ENCODE measurements at regions of chr3 and their contacts with region 1.

Region 1: DNA sequence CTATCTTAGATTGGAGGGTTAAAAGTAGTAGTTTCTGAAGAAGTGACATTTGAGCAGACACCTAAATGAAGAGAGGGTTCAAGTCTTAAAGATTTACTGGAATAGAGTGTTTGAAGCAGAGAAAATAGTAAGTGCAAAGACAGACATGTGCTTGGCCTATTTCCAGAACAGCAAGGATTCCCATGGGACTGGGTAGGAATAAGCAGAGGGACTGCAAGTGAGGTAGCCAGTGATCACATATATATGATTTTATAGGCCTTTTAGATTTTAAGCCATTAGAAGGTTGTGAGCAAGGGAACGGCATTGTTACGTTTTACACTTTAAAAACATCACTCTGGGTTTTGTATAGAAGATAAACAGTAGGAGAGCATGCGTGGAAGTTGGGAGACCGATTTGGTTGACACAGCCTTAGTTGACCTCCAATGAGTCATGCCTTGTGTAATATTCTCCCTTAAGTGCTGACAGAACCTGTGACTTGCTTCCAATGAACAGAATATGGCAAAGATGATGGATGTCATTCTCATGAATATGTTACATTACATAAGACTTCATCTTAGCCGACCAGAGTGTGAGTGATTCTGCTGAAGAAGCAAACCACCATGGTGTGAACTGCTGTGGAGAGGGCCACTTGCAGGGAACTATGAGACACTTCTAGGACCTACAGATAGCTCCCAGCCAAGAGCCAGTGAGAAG is 37.1 kb upstream of the SLC4A7 start:
- DNase-seq: peak in 1 of 2 donors; percentile 73
- H3K4me3 ChIP-seq: no peak overlapping the region
- H3K27ac ChIP-seq: peak overlapping the region in 1 of 2 donors; percentile 54
- H3K4me1 ChIP-seq: peaks cover 12 to 34% of the 10 kb centered on the region in 2 donors
- H3K27me3 ChIP-seq: no peaks in the 10 kb centered on the region
- CTCF ChIP-seq: no peak

Region 2: DNA sequence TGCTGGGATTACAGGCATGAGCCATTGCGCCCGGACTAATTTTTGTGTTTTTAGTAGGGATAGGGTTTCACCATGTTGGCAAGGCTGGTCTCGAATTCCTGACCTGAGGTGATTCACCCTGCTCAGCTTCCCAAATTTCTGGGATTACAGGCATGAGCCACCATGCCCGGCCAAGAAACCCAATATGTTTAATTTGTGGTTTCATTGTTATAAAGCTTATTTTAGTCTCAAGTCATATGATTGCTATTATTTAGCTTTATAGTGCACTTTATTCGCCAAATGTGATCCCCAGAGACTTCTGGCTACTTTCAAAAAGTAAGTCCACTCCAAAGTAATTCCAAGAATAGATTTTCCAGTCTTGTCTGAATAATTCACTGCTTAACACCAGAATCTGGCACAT is 17.8 kb before region 1 on chr3:
- intact Hi-C with region 1: loop called (anchors 1 kb)
- DNase-seq: peak; percentile 38 to 89
- H3K4me3 ChIP-seq: no peak overlapping the region
- H3K27ac ChIP-seq: peak overlapping the region; percentile 70 to 84
- H3K4me1 ChIP-seq: peaks cover 6 to 13% of the 10 kb centered on the region in 2 donors
- H3K27me3 ChIP-seq: no peaks in the 10 kb centered on the region
- CTCF ChIP-seq: no peak

Region 3: DNA sequence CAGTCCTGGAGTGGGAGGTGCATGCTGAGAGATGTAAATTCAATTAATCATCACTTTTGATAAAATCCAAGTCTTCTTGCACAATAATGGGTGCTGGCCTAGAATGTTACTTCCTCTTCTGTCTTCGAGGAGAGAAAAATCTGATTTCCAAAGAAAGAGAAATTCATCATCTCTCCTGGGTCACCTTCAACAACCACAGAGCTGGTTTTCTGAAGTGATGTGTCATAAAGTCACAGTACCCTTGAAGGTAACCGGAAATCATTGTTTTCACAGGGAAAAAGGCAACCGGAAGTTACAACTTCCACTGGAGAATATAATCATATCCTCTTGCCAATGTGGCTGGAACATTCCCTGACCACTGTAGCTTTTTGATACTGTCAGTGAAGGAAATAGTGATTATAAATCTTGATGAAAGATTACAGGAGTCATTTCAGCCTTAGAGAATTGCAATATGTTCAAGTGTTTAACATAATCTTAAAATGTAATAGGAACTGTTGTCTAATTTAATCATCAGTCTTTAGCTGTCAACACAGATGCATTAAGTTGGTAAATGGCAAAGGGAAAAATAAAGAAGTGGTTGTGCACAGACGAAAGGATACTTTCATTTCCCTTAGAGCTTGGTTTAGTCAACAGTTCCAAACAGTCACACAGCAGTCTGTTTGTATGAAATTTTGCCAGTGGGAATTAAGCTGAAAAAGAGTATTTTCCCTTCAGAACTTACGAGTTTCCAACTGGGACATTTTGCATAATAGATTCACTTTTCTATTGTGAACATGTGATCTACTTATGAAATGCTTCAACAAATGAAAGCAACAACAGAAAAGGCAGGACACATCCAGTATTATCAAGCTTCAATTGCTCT is 69.3 kb after region 1 on chr3:
- intact Hi-C with region 1: loop called (anchors 5 kb)
- DNase-seq: no peak
- H3K4me3 ChIP-seq: peak overlapping the region; percentile 5 to 16
- H3K27ac ChIP-seq: peak overlapping the region; percentile 76 to 81
- H3K4me1 ChIP-seq: peaks cover 3 to 25% of the 10 kb centered on the region in 2 donors
- H3K27me3 ChIP-seq: no peaks in the 10 kb centered on the region
- CTCF ChIP-seq: no peak

Region 4: DNA sequence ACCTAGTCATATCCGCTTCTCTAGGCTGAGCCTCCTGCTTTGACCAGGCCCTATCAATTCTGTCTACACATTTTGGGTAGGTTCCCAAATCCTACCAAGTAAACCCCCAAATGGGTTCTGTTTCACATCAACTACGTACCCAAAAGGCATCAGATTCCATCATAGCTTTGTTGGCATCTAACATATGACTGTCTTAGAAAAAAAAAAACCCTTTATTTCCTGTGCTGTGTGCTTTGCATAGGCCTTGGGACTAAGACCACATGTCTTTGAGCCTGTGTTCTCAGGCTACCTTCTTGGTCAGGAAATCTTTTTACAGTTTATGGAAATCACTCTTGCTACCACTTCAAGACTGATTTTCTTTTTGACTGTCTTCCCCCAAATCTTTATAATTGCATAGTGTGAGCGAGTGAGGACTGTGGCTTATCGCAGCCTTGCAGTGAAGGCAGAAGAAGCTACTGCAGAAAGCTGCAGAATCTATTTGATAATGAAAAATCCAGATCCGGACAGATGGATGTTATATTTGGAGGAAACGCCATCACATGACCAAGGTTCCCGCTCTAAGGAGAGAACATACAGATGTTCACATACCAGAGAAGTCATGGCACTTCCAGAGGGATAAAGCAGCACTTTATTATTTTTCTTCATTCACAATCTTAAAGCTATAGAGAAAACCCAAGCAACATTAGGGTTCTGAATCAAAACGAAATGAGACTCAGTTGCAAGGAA is 89.6 kb after region 1 on chr3:
- intact Hi-C with region 1: no loop called
- DNase-seq: no peak
- H3K4me3 ChIP-seq: no peak overlapping the region
- H3K27ac ChIP-seq: no peak overlapping the region
- H3K4me1 ChIP-seq: peaks cover 0 to 4% of the 10 kb centered on the region in 2 donors
- H3K27me3 ChIP-seq: no peaks in the 10 kb centered on the region
- CTCF ChIP-seq: no peak

Region 5: DNA sequence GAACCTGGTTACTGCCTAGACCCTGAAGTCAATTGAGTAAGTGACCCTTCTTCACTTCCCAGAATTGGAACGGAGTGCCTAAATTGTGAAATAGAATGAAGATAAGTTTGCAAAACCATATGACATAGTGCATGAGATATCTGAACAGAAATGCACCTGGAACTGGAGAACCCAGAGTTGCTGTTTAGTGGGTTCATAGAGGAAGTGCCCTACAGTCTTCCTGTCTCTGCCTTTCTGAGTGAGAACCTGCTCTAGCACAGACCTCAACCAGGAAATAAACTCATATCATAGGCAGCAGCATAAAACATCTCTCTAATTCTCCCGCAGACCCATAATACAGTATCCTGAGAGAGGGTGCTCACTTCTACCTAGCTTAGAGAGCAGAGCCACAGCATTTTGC is 117.9 kb after region 1 on chr3:
- intact Hi-C with region 1: loop called (anchors 5 kb)
- DNase-seq: no peak
- H3K4me3 ChIP-seq: no peak overlapping the region
- H3K27ac ChIP-seq: peak overlapping the region in 1 of 2 donors; percentile 83
- H3K4me1 ChIP-seq: peaks cover 4 to 18% of the 10 kb centered on the region in 2 donors
- H3K27me3 ChIP-seq: no peaks in the 10 kb centered on the region
- CTCF ChIP-seq: no peak

Region 6: GRCh38 chr3:27737091-27737490 is 215.8 kb after region 1 on chr3:
- intact Hi-C with region 1: no loop called
- DNase-seq: no peak
- H3K4me3 ChIP-seq: no peak overlapping the region
- H3K27ac ChIP-seq: no peak overlapping the region
- H3K4me1 ChIP-seq: no peaks in the 10 kb centered on the region
- H3K27me3 ChIP-seq: no peaks in the 10 kb centered on the region
- CTCF ChIP-seq: no peak

Region 7: DNA sequence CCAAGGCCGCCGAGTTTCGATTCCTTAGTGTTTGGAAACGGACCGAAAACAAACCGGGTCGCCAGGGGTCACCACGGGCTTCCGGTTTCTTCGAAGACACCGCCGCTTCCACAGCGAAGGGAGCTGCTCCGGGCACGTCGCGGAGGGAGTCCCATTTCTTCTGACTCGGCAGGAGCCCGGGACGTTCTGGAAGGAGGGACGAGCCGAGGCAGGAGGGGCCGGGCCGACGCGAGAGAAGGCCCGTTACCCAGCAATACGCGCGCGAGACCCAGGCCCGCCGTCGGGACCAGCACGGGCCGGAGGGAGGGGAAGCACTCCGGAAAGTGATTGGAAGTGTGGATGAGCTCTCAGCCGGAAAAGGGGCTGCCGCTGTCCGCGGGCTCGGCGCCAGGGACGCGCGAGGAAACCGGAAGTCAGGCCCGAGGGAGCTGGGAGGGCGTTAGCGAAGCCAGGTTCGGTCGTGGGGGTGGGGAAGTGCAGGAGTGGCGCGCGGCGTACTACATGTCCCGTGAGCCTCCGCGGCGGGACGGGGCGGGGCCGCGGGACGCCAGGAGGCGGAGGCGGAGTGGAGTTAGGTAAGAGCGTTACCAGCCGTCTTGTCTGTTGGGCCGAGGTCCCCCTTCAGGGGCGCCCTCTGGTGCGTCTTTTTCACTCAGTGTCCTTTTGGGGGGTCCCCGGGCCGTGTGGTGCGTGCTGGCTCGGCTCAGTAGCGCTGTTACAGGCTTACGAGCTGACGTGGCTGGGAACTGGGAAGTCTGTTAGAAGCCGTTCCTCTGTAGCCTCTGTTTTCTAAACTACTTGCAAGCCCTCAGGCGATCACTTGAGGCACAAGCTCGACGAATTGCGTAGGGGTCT is 827.5 kb after region 1 on chr3 and contains the starts of genes AZI2 and ZCWPW2:
- intact Hi-C with region 1: loop called (anchors 10 kb)
- DNase-seq: peak; percentile 76 to 98
- H3K4me3 ChIP-seq: peak within 1 kb of the TSS; percentile 88 to 95
- H3K27ac ChIP-seq: peak within 1 kb of the TSS; percentile 100
- H3K4me1 ChIP-seq: peaks cover 0 to 32% of the 10 kb centered on the region in 2 donors
- H3K27me3 ChIP-seq: no peaks in the 10 kb centered on the region
- CTCF ChIP-seq: peak in 1 of 3 experiments; percentile 31
- total RNA-seq, gene AZI2: 15.3 TPM
- total RNA-seq, gene ZCWPW2: not detected